GM13976 (cell line): ENCODE measurements at regions of chr1 and their contacts with region 1.

Region 1: GRCh38 chr1:21669258-21670058 is at the start of gene RAP1GAP:
- DNase-seq: peak; percentile 69
- CTCF ChIP-seq: no peak

Region 2: GRCh38 chr1:21124846-21125245 is 544.6 kb before region 1 on chr1:
- in situ Hi-C with region 1: no loop called
- DNase-seq: no peak
- CTCF ChIP-seq: no peak

Region 3: GRCh38 chr1:21963477-21964217 is 294.2 kb after region 1 on chr1:
- in situ Hi-C with region 1: loop called (anchors 10 kb)
- DNase-seq: peak; percentile 84
- CTCF ChIP-seq: peak; percentile 70